ENCODE measurements at regions of chr1 and their contacts with region 1.

Region 1: DNA sequence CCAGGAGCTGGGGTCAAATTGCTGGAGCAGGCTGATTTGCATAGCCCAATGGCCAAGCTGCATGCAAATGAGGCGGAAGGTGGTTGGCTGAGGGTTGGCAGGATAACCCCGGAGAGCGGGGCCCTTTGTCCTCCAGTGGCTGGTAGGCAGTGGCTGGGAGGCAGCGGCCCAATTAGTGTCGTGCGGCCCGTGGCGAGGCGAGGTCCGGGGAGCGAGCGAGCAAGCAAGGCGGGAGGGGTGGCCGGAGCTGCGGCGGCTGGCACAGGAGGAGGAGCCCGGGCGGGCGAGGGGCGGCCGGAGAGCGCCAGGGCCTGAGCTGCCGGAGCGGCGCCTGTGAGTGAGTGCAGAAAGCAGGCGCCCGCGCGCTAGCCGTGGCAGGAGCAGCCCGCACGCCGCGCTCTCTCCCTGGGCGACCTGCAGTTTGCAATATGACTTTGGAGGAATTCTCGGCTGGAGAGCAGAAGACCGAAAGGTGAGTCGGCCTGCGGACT is at the start of gene GADD45A:
- DNase-seq: peak; percentile 98 to 99 (median 99)
- ATAC-seq: peak; percentile 95 to 96
- H3K4me3 ChIP-seq: peak within 1 kb of the TSS; percentile 81
- H3K27ac ChIP-seq: peak within 1 kb of the TSS; percentile 91
- H3K4me1 ChIP-seq: peaks cover 2% of the 10 kb centered on the region
- H3K27me3 ChIP-seq: no peaks in the 10 kb centered on the region
- total RNA-seq, gene GADD45A: 10.5 to 23.3 (median 18.2) TPM

Region 2: GRCh38 chr1:67429528-67430351 is 255.4 kb before region 1 on chr1:
- intact Hi-C with region 1: loop called in 1 of 4 experiments (anchors 5 kb)
- DNase-seq: peak; percentile 36 to 67 (median 67)
- ATAC-seq: peak; percentile 30 to 42
- H3K4me3 ChIP-seq: peak overlapping the region; percentile 58
- H3K27ac ChIP-seq: peak overlapping the region; percentile 4
- H3K4me1 ChIP-seq: no peaks in the 10 kb centered on the region
- H3K27me3 ChIP-seq: no peaks in the 10 kb centered on the region

Region 3: DNA sequence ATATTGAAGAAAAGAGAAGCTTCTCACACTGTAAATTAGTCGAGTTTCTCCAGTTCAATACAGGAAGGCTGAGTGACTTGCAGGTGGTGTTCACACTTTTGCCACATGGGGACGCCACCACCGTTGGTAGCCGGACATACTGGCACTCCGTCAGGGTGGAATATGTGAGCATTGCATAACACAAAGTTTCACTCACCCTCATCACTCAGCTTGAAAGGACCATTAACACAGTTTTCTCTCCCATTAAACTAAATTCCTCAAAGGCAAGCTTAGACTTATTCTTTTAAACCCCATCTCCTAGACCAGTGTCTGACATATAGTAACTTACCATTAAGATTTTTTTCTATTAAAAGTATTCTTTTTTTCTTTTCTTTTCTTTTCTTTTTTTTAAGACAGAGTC is 149.6 kb before region 1 on chr1:
- intact Hi-C with region 1: loop called in 1 of 4 experiments (anchors 10 kb)
- DNase-seq: peak; percentile 75 to 90 (median 88)
- ATAC-seq: peak; percentile 60 to 77
- H3K4me3 ChIP-seq: no peak overlapping the region
- H3K27ac ChIP-seq: no peak overlapping the region
- H3K4me1 ChIP-seq: no peaks in the 10 kb centered on the region
- H3K27me3 ChIP-seq: no peaks in the 10 kb centered on the region

Region 4: DNA sequence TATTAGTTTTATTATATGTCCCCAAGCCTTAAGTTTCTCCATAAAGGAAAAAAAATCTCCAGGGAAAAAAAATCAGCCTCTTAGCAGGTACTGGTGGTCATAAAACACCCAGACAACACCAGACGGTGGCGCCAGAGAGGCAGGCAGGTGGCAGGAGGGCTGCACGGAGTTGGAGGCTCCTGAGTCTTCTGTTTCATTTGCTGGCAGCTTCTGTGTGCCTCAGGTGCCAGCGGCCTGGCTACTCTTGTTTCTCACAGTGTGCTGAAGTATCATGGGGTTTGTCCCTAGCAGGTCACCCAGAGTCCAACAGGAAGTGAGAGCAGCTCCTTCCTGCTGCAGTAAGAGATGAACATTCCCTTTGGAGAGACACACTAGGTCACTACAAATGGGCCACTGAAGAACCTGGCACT is 123.4 kb before region 1 on chr1:
- intact Hi-C with region 1: loop called in 1 of 4 experiments (anchors 10 kb)
- DNase-seq: peak; percentile 90 to 96 (median 94)
- ATAC-seq: peak; percentile 68 to 78
- H3K4me3 ChIP-seq: no peak overlapping the region
- H3K27ac ChIP-seq: no peak overlapping the region
- H3K4me1 ChIP-seq: peaks cover 5% of the 10 kb centered on the region
- H3K27me3 ChIP-seq: no peaks in the 10 kb centered on the region

Region 5: DNA sequence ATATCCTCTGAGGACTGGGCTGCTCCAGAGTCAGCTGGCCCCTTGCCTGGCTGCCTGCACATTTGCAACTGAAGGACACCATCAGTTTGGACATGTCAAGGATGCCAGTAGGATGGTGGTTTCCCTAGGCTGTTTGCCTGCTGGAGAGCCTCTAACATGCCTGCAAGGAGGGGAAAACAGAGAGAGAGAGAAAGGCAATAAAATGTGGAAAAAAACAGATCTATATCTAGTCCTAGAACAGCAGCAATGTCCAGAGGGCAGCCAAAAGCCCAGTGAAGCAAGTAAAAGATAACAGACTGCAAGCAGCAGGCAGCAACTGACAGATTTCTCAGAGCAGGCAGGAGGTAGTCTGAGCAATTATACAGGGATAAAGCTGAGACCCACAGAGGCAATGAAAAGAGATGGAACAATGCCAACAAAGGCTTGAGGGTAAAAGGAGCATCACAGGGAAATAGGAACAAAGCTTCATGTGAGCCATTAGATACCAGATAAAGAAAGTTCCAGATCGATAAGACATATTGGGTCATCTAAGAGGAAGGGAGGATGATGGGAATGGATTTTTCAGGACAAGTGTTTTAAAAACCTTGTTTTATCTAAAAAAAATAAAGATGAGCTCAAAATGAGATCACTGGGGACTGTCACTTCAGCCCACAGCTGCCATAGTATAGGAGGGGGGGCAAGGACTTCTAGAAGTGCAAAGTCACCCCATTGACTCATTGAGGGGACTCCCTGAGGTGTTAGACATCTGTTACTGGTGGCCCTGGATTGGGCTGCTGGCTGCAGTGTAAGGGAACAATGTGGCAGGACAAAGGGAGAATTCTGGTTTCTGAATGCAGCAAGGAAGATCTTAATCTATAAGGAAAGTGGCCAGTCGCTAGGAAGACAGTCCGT is 38.7 kb before region 1 on chr1:
- intact Hi-C with region 1: loop called in 1 of 4 experiments (anchors 5 kb)
- DNase-seq: peak; percentile 48 to 90 (median 86)
- ATAC-seq: peak; percentile 46 to 57
- H3K4me3 ChIP-seq: no peak overlapping the region
- H3K27ac ChIP-seq: peak overlapping the region; percentile 51
- H3K4me1 ChIP-seq: peaks cover 6% of the 10 kb centered on the region
- H3K27me3 ChIP-seq: no peaks in the 10 kb centered on the region

Region 6: DNA sequence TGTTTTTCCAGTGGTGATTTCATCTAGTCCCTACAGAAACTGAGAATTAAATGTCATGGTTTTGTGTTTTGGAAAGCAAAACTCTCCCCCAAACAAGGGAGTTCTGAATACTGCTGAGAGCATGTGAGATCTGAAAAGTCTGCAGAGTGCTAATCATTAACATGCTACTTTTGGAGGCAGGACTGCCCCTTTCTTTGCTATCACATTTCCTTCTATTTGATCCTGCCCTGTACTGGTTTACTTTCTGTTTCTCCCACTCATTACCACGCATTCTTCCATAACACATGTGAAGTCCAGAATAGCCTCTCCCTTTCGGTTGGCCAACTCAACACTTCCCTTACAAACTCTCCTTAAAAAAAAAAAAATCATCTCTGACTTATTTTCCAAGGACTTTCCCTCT is 63.5 kb after region 1 on chr1:
- intact Hi-C with region 1: loop called in 2 of 4 experiments (anchors 10 kb)
- DNase-seq: no peak
- ATAC-seq: peak; percentile 85 to 92
- H3K4me3 ChIP-seq: no peak overlapping the region
- H3K27ac ChIP-seq: no peak overlapping the region
- H3K4me1 ChIP-seq: peaks cover 4% of the 10 kb centered on the region
- H3K27me3 ChIP-seq: no peaks in the 10 kb centered on the region